Right ventricle myocardium superior (tissue), 1 donor: ENCODE measurements at regions of chr1 and their contacts with region 1.

Region 1: GRCh38 chr1:150010393-150011115 is at the start of gene OTUD7B:
- DNase-seq: peak; percentile 91
- ATAC-seq: peak; percentile 97
- total RNA-seq, gene OTUD7B: 23.2 TPM

Region 2: GRCh38 chr1:149886396-149887195 is 124.0 kb before region 1 on chr1:
- intact Hi-C with region 1: no loop called
- DNase-seq: peak; percentile 84
- ATAC-seq: peak; percentile 88

Region 3: DNA sequence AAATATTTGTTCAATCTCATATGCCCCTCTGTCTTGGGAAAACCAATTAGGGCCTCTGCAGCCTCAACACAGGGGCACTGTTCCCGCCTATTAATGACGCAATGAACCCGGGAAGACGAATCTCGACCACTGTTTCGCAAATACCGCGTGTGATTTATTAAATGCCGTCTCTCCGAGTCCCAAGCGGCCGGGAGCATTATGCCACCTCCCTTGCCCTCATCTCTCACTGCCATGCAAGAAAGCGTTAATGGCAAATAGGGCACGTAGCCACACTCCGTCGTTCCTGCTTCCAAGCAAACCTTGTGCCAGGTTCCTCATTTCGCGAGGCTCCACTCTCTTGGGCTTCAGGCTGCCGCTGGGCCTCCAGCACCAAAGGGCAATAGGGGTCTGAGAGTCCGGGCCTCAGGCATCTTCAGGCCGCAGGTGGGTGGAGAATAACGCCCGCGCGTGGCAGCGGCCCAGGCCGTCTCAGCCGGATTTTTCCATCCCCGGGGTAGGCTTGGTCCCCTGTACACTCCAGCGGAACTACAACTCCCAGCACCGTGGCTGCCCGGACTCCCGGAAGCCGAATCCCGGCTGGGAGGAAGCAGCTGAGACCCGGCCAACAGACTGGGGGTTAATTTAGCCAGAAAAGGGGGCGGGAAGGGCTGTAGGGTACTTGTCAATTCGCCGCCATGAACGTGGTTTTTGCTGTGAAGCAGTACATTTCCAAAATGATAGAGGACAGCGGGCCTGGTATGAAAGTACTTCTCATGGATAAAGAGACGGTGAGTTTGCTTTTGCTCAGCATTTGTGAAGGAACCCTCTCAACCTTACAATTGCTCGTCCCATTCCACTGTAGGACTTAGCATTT is 56.9 kb after region 1 on chr1 and contains the start of gene VPS45:
- intact Hi-C with region 1: loop called (anchors 2 kb)
- DNase-seq: peak; percentile 93
- ATAC-seq: peak; percentile 98
- total RNA-seq, gene VPS45: 48.9 TPM

Region 4: DNA sequence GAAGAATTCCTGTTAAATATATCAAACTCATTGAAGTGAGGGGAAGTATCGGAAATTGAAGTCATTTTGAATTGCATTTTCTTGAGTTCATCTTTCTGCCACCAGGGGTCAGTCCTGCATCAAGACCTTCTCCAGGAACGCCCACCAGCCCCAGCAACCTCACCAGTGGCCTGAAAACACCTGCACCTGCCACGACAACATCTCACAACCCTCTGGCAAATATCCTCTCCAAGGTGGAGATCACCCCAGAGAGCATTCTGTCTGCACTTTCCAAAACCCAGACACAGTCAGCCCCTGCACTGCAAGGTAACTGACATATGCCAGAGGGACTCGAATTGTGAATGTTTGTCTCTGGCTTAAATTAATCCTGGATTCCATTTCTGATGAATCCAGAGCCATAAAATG is 453.9 kb after region 1 on chr1:
- intact Hi-C with region 1: no loop called
- DNase-seq: no peak
- ATAC-seq: peak; percentile 74